ENCODE measurements at regions of chr4 and their contacts with region 1.

Region 1: DNA sequence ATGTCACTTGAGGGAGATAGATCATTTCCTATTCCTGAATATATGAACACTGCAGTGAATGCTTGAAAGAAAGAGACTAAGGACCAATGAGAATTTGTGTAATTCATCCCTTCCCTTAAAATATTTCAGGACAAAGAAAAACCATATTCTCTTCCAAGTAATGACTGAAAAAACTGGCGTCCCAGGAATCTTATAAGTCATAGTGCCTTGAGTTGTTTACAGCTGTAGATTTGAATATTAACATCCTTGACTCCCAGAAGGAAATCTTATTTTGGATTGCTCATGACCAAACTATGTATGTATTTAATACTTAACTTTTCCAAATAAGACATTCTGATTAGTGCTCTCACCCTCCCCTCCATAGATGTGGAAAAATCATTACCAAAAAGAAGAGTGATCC is 55.5 kb downstream of the CLDN22 start:
- DNase-seq: no peak
- ATAC-seq: no peak
- H3K4me3 ChIP-seq: no peak overlapping the region
- H3K27ac ChIP-seq: no peak overlapping the region
- H3K4me1 ChIP-seq: peaks cover 9 to 19% of the 10 kb centered on the region in 2 donors
- H3K27me3 ChIP-seq: no peaks in the 10 kb centered on the region
- CTCF ChIP-seq: no peak

Region 2: GRCh38 chr4:182897601-182898478 is 366.8 kb before region 1 on chr4:
- intact Hi-C with region 1: no loop called
- DNase-seq: peak in 1 of 4 donors; percentile 70
- ATAC-seq: peak; percentile 89
- H3K4me3 ChIP-seq: no peak overlapping the region
- H3K27ac ChIP-seq: peak overlapping the region in 1 of 2 donors; percentile 4
- H3K4me1 ChIP-seq: no peaks in the 10 kb centered on the region
- H3K27me3 ChIP-seq: no peaks in the 10 kb centered on the region
- CTCF ChIP-seq: no peak

Region 3: GRCh38 chr4:182944484-182945213 is 320.0 kb before region 1 on chr4:
- intact Hi-C with region 1: loop called (anchors 5 to 10 kb)
- DNase-seq: no peak
- ATAC-seq: no peak
- H3K4me3 ChIP-seq: no peak overlapping the region
- H3K27ac ChIP-seq: no peak overlapping the region
- H3K4me1 ChIP-seq: no peaks in the 10 kb centered on the region
- H3K27me3 ChIP-seq: no peaks in the 10 kb centered on the region
- CTCF ChIP-seq: no peak

Region 4: GRCh38 chr4:183532821-183533220 is 268.2 kb after region 1 on chr4:
- intact Hi-C with region 1: no loop called
- DNase-seq: no peak
- ATAC-seq: no peak
- H3K4me3 ChIP-seq: no peak overlapping the region
- H3K27ac ChIP-seq: no peak overlapping the region
- H3K4me1 ChIP-seq: no peaks in the 10 kb centered on the region
- H3K27me3 ChIP-seq: peaks cover 0 to 11% of the 10 kb centered on the region in 2 donors
- CTCF ChIP-seq: no peak